OCI-LY7 (cell line): ENCODE measurements at regions of chr12 and their contacts with region 1.

Region 1: GRCh38 chr12:49358483-49359141 is 8.7 kb upstream of the SPATS2 start:
- DNase-seq: peak; percentile 86
- H3K4me3 ChIP-seq: no peak overlapping the region
- H3K27ac ChIP-seq: no peak overlapping the region
- H3K4me1 ChIP-seq: no peaks in the 10 kb centered on the region
- CTCF ChIP-seq: peak; percentile 98

Region 2: GRCh38 chr12:49377386-49377785 is 18.8 kb after region 1 on chr12:
- CTCF ChIA-PET with region 1: no interaction called
- POLR2A ChIA-PET with region 1: no interaction called
- intact Hi-C with region 1: no loop called
- DNase-seq: no peak
- H3K4me3 ChIP-seq: no peak overlapping the region
- H3K27ac ChIP-seq: no peak overlapping the region
- H3K4me1 ChIP-seq: peaks cover 5% of the 10 kb centered on the region
- CTCF ChIP-seq: no peak

Region 3: DNA sequence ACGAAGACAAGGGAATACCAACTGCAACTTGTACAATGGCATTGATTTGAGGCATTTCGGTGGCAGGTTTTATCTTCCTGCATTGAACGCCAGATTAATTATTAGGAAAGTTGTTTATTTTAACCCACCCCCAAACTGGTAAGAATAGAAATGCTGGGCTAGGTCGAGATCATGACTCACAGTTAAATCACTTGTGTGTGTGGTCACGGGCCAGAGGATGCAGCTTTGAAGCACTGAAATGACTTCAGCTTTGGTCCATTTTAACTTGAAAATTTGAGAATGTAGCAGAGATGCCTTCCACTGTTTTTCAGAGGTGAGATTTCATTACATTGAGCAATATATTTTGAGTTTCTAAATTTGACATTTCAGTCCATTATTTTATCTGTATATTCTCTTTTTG is 156.7 kb after region 1 on chr12:
- CTCF ChIA-PET with region 1: interaction called, 13 read pairs
- POLR2A ChIA-PET with region 1: interaction called, 18 read pairs
- intact Hi-C with region 1: loop called (anchors 1 kb)
- DNase-seq: no peak
- H3K4me3 ChIP-seq: no peak overlapping the region
- H3K27ac ChIP-seq: no peak overlapping the region
- H3K4me1 ChIP-seq: no peaks in the 10 kb centered on the region
- CTCF ChIP-seq: no peak

Region 4: DNA sequence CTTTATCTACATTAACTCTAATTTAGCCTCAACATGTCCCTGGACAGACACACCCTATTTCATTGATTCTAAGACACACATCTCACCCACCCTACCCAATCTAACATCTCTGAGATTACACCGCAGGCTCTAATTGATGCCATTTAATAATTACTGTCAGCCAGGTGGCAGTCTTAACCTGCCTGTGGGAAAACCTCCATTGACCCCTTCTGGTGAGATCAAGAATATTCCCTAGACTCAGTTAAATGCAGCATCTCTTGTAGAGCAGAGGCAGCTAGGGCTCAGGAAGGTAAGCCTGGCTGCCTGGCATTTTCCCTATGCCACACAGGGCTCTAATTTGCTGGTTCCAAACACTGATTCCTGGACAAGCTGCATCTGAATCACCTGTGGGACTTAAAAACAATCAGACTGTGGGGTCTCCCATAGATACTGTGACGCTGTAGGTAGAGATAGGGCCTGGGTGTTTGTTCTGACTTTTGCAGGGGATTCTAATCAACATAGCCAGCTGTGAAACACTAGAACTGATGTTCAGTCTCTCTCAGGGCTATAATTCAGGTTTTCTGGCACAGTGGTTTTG is 195.0 kb after region 1 on chr12:
- CTCF ChIA-PET with region 1: interaction called, 4 read pairs
- POLR2A ChIA-PET with region 1: no interaction called
- intact Hi-C with region 1: loop called (anchors 1 kb)
- DNase-seq: peak; percentile 81
- H3K4me3 ChIP-seq: no peak overlapping the region
- H3K27ac ChIP-seq: no peak overlapping the region
- H3K4me1 ChIP-seq: peaks cover 19% of the 10 kb centered on the region
- CTCF ChIP-seq: peak; percentile 94

Region 5: DNA sequence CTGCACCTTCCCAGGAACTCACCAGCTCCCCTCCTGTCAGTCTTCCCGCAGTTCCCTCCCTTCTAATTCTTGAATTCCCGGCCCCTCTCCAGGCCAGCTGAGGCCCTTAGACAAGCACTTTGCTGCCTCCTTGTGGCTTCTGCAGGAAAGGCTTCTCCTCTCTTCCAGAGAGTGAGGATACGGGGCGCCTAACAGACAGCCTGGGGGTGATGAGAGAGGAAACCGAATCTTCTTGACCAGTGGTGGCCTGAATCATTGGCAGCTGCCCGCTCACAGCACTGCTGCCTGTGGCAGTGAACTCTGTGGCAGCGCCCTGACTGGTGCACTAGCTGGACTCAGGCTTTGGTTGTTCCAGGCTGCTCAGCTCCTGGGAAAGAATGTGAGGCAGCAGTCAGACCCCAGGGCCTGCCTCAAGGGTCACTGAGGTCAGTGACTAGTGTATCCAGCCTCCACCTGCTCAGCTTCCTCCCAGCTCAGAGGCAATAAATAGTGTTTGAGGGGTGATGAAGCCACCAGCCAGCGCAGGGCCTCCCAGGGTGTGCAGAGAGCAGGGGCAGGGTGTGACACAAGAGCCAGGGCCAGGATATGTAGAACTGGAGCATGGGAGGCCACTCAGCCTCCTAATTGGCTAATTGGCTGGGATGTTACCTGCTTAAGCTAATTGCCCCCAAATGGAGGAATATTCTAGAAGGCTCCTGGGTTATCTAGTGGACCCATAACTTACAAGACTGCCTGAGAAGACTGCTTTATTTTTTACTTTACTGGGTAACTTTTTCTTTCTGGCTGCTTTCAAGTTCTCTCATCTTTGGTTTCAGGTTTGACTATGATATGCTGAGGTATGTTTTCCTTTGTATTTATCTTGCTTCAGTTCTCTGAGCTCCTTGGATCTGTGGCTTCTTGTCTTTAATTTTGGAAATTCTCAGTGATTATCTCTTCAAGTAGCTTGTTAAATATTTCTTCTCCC is 222.2 kb after region 1 on chr12:
- CTCF ChIA-PET with region 1: no interaction called
- POLR2A ChIA-PET with region 1: no interaction called
- intact Hi-C with region 1: loop called (anchors 1 kb)
- DNase-seq: peak; percentile 69
- H3K4me3 ChIP-seq: no peak overlapping the region
- H3K27ac ChIP-seq: no peak overlapping the region
- H3K4me1 ChIP-seq: no peaks in the 10 kb centered on the region
- CTCF ChIP-seq: peak; percentile 90